SK-N-SH (cell line): ENCODE measurements at regions of chr3 and their contacts with region 1.

Region 1: GRCh38 chr3:149120051-149120972 is 9.1 kb upstream of the HPS3 start:
- DNase-seq: peak; percentile 65
- H3K4me3 ChIP-seq: no peak overlapping the region
- H3K27ac ChIP-seq: no peak overlapping the region; a peak in 1 of 4 replicates
- H3K4me1 ChIP-seq: no peaks in the 10 kb centered on the region
- H3K27me3 ChIP-seq: no peaks in the 10 kb centered on the region
- CTCF ChIP-seq: peak; percentile 73
- EP300 ChIP-seq: no peak
- RAD21 ChIP-seq: peak; percentile 93

Region 2: DNA sequence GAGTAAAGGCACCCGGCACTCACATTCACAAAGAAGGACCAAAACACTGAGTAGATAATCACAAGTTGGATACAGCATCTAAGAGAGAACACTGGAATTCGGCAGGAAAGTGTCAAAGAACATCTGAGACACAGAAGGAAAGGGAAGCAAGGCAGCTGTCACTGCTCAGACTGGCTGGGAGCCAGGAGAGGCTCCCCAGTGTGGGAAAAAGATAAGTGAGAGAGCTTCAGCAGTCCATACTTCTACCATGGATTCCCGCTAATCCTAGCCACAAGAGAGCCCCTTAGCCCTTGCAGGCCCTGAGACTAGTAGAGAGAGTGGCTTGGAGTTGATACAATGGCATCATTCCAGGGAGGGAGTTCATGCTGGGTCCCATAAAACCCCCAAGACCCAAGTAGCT is 138.0 kb after region 1 on chr3:
- CTCF ChIA-PET with region 1: interaction called, 13 read pairs
- POLR2A ChIA-PET with region 1: no interaction called
- DNase-seq: no peak
- H3K4me3 ChIP-seq: no peak overlapping the region
- H3K27ac ChIP-seq: no peak overlapping the region
- H3K4me1 ChIP-seq: peaks cover 0 to 2% of the 10 kb centered on the region in 2 experiments; a peak in 1 of 4 replicates
- H3K27me3 ChIP-seq: no peaks in the 10 kb centered on the region
- CTCF ChIP-seq: no peak
- EP300 ChIP-seq: no peak
- RAD21 ChIP-seq: no peak

Region 3: GRCh38 chr3:149273096-149273751 is 152.9 kb after region 1 on chr3:
- CTCF ChIA-PET with region 1: interaction called, 126 read pairs
- POLR2A ChIA-PET with region 1: no interaction called
- DNase-seq: peak; percentile 63
- H3K4me3 ChIP-seq: peak overlapping the region in 1 of 2 experiments; percentile 37; a peak in 1 of 4 replicates
- H3K27ac ChIP-seq: no peak overlapping the region
- H3K4me1 ChIP-seq: 0 out of 4 replicates have a peak, but pooled peaks cover 0 to 12% of the 10 kb centered on the region in 2 experiments
- H3K27me3 ChIP-seq: no peaks in the 10 kb centered on the region
- CTCF ChIP-seq: peak; percentile 98
- EP300 ChIP-seq: peak in 1 of 2 experiments; percentile 16; a peak in 1 of 4 replicates
- RAD21 ChIP-seq: peak; percentile 99

Region 4: GRCh38 chr3:149319750-149320149 is 199.4 kb after region 1 on chr3:
- CTCF ChIA-PET with region 1: no interaction called
- POLR2A ChIA-PET with region 1: no interaction called
- DNase-seq: no peak
- H3K4me3 ChIP-seq: no peak overlapping the region
- H3K27ac ChIP-seq: no peak overlapping the region
- H3K4me1 ChIP-seq: peaks cover 0 to 1% of the 10 kb centered on the region in 2 experiments; a peak in 2 of 4 replicates
- H3K27me3 ChIP-seq: no peaks in the 10 kb centered on the region
- CTCF ChIP-seq: no peak
- EP300 ChIP-seq: no peak
- RAD21 ChIP-seq: no peak